Activated CD8-positive, alpha-beta T cell treated with anti-CD3 and anti-CD28 coated beads, Interleukin-2, amount 10 ng/mL, durations not matched to agents 7 days and 5 days (primary cell): ENCODE measurements at regions of chr10 and their contacts with region 1.

Region 1: GRCh38 chr10:72107325-72108003 is 19.1 kb upstream of the SPOCK2 start:
- DNase-seq: peak; percentile 65
- ATAC-seq: peak; percentile 72
- H3K4me3 Mint-ChIP-seq: peak overlapping the region; percentile 77
- H3K27ac Mint-ChIP-seq: peak overlapping the region; percentile 92
- H3K4me1 Mint-ChIP-seq: peaks cover 61% of the 10 kb centered on the region
- H3K27me3 Mint-ChIP-seq: no peaks in the 10 kb centered on the region

Region 2: DNA sequence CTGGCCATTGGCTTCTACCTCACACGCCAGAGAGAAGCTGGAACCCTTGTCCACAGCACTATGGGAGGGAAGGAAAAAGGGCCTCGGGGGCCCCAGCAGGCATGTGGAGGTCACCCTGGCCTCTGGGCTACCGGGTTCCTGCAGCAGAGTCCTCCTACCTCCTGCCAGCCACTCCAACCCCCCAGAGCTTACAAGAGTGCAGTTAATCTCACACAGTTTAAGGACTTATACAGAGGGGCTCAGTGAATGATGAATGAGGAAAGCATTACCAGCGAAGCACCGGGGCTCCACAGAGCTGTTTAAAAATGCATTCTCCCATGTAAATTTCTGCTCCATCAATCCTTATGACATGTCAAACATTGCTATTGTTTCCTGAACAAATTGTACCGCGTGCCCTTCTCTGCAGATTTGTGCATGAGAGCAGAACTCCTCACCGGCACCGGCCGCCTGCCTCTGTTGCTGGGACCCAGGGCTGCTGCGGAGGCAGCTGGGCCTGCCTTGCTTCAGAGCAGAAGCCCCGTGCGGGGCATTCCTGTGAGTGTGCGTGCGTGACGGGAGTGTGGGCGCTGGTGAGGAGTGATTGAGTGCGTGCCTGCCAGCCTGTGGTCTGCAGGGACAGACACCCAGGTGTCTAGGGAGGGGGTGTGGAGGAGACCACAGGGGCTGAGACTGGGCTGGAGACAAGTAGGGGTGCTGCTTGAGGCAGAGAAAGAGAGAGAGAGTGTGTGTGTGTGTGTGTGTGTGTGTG is 440.7 kb before region 1 on chr10:
- CTCF ChIA-PET with region 1: no interaction called
- POLR2A ChIA-PET with region 1: no interaction called
- DNase-seq: no peak
- ATAC-seq: peak; percentile 47
- H3K4me3 Mint-ChIP-seq: no peak overlapping the region
- H3K27ac Mint-ChIP-seq: peak overlapping the region; percentile 80
- H3K4me1 Mint-ChIP-seq: peaks cover 27% of the 10 kb centered on the region
- H3K27me3 Mint-ChIP-seq: peaks cover 4% of the 10 kb centered on the region

Region 3: GRCh38 chr10:72079356-72079755 is 28.1 kb before region 1 on chr10:
- CTCF ChIA-PET with region 1: no interaction called
- POLR2A ChIA-PET with region 1: interaction called, 15 read pairs
- DNase-seq: peak; percentile 78
- ATAC-seq: peak; percentile 49
- H3K4me3 Mint-ChIP-seq: peak overlapping the region; percentile 34
- H3K27ac Mint-ChIP-seq: peak overlapping the region; percentile 82
- H3K4me1 Mint-ChIP-seq: peaks cover 91% of the 10 kb centered on the region
- H3K27me3 Mint-ChIP-seq: no peaks in the 10 kb centered on the region

Region 4: DNA sequence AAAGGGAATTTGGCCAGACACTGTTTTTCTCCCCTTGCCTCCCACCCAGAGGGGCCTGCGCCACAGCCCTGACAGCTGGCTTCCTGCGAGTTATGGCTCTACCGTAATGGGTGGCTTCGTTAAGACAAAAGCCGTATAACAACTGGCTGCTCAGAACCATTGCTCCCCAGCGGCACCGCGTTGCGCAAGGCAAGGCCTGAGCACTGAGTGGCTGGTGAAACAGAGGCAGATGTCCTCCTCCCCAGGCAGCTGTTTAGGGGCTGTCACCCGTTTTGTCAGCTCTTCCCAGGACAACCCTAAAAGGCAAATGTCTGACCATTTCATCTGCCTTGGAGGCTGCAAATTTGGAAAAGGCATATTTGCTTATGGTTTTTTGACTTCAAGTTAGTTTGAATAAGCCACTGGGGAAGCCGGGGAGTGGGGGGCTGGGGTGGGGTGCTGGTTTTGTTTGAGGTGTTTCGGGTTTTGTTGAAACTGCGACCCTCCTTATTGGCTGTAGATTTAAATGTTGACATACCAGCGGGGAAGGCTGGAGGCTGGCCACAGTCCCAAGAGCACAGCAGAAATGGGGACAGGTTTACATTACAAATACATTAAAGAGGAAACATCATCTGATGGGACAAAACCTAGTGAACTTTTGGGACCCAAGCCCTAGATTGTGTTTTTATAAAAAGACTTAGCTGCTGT is 18.4 kb before region 1 on chr10:
- CTCF ChIA-PET with region 1: interaction called, 14 read pairs
- POLR2A ChIA-PET with region 1: interaction called, 51 read pairs
- DNase-seq: peak; percentile 73
- ATAC-seq: peak; percentile 54
- H3K4me3 Mint-ChIP-seq: peak overlapping the region; percentile 97
- H3K27ac Mint-ChIP-seq: peak overlapping the region; percentile 99
- H3K4me1 Mint-ChIP-seq: peaks cover 56% of the 10 kb centered on the region
- H3K27me3 Mint-ChIP-seq: no peaks in the 10 kb centered on the region